Vagina (tissue), 2 donors: ENCODE measurements at regions of chr7 and their contacts with region 1.

Region 1: GRCh38 chr7:6323967-6324701 is 51.7 kb upstream of the CYTH3 start:
- DNase-seq: no peak
- H3K4me3 ChIP-seq: no peak overlapping the region
- H3K27ac ChIP-seq: no peak overlapping the region
- H3K4me1 ChIP-seq: no peaks in the 10 kb centered on the region
- H3K27me3 ChIP-seq: no peaks in the 10 kb centered on the region
- CTCF ChIP-seq: no peak
- POLR2A ChIP-seq: no peak

Region 2: DNA sequence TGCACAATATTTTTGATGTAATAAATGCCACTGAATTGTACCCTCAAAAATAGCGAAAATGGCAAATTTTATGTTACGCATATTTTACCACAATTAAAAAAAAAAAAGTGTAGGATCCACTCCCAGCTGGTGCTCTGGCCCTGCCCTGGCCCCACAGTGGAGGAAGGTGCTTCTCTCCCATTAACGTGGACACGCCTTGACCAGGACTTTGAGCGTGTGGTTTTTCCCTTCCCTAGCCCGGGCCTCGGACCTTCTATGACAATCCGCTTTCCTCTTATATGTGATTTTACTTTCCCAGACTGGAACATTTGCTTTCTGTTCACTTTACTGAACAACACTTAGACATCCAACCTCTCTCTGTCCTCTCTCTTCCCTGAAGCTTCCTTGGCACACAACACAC is 473.2 kb before region 1 on chr7:
- intact Hi-C with region 1: no loop called
- DNase-seq: no peak
- H3K4me3 ChIP-seq: no peak overlapping the region
- H3K27ac ChIP-seq: no peak overlapping the region
- H3K4me1 ChIP-seq: no peaks in the 10 kb centered on the region
- H3K27me3 ChIP-seq: no peaks in the 10 kb centered on the region
- CTCF ChIP-seq: no peak
- POLR2A ChIP-seq: no peak

Region 3: DNA sequence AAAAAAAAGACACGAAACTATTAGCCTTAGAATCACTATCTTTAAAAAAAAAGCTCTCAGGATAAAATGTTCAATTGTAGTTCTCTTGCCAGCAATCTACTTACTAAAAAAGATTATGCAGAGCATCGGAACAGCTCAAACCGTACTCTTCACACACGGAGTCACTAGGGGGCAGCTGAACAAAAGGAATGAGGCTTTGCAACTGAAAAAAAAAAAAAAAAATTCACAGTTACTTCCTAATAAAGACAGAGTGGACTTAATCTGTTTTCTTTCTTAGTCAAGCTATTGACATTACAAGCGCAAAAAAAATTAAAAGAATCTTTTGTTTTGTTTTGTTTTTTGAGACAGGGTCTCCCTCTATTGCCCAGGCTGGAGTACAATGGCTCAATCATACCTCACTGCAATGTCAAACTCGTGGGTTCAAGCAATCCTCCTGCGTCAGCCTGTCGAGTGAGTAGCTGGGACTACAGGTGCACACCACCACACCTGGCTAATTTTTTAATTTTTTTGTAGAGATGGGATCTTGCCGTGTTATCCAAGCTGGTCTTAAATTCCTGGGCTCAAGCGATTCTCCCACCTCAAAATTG is 326.8 kb before region 1 on chr7:
- intact Hi-C with region 1: loop called (anchors 10 kb)
- DNase-seq: no peak
- H3K4me3 ChIP-seq: no peak overlapping the region
- H3K27ac ChIP-seq: no peak overlapping the region
- H3K4me1 ChIP-seq: no peaks in the 10 kb centered on the region
- H3K27me3 ChIP-seq: no peaks in the 10 kb centered on the region
- CTCF ChIP-seq: peak; percentile 37 to 52 (median 42)
- POLR2A ChIP-seq: no peak

Region 4: GRCh38 chr7:6161463-6162330 is 162.4 kb before region 1 on chr7:
- intact Hi-C with region 1: loop called (anchors 5 kb)
- DNase-seq: no peak
- H3K4me3 ChIP-seq: no peak overlapping the region
- H3K27ac ChIP-seq: no peak overlapping the region
- H3K4me1 ChIP-seq: no peaks in the 10 kb centered on the region
- H3K27me3 ChIP-seq: no peaks in the 10 kb centered on the region
- CTCF ChIP-seq: no peak
- POLR2A ChIP-seq: no peak

Region 5: DNA sequence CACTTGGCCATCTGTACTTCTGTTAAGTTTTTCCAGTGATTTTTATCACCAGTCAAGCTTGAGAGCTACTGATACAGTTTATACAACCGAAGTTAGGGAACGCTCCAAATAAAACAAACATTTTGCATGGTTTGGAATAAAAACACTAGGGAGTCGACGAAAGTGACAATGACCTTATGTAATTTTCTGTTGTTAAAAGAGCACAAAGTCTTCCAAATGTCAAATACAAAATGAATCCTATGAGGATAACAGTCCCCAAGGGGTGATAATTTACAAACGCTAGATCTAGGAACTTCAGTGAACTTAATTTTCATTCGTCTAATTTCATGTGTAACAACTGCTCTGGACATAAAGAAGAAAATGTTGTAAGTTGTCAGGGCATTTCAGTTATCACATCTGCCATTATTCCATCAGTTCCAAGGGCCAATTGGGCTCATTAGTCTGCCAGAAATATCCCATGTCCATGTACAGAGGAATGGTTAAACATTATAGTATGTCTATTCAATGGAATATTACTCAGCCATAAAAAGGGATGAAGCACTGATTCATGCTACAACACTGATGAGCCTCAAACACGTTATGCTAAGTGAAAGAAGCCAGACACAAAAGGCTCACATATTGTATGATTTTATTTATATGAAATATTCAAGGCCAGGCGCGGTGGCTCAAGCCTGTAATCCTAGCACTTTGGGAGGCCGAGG is 13.7 kb before region 1 on chr7:
- intact Hi-C with region 1: loop called (anchors 1 kb)
- DNase-seq: no peak
- H3K4me3 ChIP-seq: no peak overlapping the region
- H3K27ac ChIP-seq: no peak overlapping the region
- H3K4me1 ChIP-seq: no peaks in the 10 kb centered on the region
- H3K27me3 ChIP-seq: no peaks in the 10 kb centered on the region
- CTCF ChIP-seq: no peak
- POLR2A ChIP-seq: no peak